ENCODE measurements at regions of chr5 and their contacts with region 1.

Region 1: DNA sequence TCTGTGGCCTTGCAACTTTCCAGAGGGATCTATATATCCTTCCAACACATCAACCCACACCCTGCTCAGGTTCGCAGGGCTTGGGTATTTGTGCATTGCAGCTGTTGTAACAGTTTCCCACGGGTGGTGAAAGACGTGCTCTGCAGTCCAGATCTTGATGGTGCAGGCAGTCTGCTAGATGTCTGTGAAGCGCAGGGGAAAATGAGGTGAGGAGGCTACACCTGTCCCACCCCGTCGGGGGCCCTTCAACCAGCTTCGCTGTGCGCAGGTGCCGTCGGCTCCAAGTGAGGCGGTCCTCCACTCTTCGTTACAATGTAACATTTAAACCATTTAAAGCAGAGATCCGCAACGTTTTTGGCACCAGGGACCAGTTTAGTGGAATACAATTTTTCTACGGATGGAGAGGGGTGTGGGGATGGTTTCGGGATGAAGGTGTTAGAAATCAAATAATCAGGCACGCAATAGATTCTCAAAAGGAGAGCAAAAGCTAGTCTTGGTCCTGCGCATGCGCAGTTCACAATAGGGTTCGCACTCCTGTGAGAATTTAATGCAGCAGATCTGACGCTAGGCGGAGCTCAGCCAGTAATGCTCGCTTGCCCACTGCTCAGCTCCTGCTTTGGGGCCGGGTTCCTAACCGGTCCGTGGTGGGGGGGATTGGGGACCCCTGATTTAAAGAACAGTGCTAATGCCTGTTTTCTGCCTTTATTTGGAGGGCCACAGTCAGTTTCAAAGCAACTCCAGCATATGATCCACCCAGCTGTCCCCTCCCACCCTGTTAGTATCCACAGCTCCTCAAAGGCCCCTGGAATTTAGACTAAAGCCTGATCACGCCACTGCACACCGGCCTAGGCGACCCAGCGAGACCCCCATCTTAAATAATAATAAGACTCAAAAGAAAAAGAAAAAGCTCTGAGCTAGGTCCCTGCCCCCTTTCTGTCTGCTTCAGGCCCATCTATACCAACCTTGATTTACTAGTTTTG is 97.1 kb upstream of the SELENOP start:
- DNase-seq: peak; percentile 95
- ATAC-seq: peak; percentile 94
- H3K4me3 Mint-ChIP-seq: peak overlapping the region; percentile 89
- H3K27ac Mint-ChIP-seq: peak overlapping the region; percentile 82
- H3K4me1 Mint-ChIP-seq: peaks cover 18% of the 10 kb centered on the region
- H3K27me3 Mint-ChIP-seq: peaks cover 28% of the 10 kb centered on the region

Region 2: GRCh38 chr5:42889311-42889933 is 19.4 kb before region 1 on chr5:
- CTCF ChIA-PET with region 1: interaction called, 13 read pairs
- POLR2A ChIA-PET with region 1: no interaction called
- DNase-seq: peak; percentile 81
- ATAC-seq: peak; percentile 93
- H3K4me3 Mint-ChIP-seq: no peak overlapping the region
- H3K27ac Mint-ChIP-seq: no peak overlapping the region
- H3K4me1 Mint-ChIP-seq: no peaks in the 10 kb centered on the region
- H3K27me3 Mint-ChIP-seq: peaks cover 11% of the 10 kb centered on the region

Region 3: GRCh38 chr5:42950440-42951292 is 41.9 kb after region 1 on chr5:
- CTCF ChIA-PET with region 1: interaction called, 75 read pairs
- POLR2A ChIA-PET with region 1: interaction called, 17 read pairs
- DNase-seq: peak; percentile 73
- ATAC-seq: peak; percentile 38
- H3K4me3 Mint-ChIP-seq: peak overlapping the region; percentile 96
- H3K27ac Mint-ChIP-seq: peak overlapping the region; percentile 100
- H3K4me1 Mint-ChIP-seq: peaks cover 43% of the 10 kb centered on the region
- H3K27me3 Mint-ChIP-seq: no peaks in the 10 kb centered on the region

Region 4: GRCh38 chr5:42989190-42989589 is 80.4 kb after region 1 on chr5:
- CTCF ChIA-PET with region 1: interaction called, 17 read pairs
- POLR2A ChIA-PET with region 1: interaction called, 13 read pairs
- DNase-seq: no peak
- ATAC-seq: no peak
- H3K4me3 Mint-ChIP-seq: peak overlapping the region; percentile 72
- H3K27ac Mint-ChIP-seq: peak overlapping the region; percentile 75
- H3K4me1 Mint-ChIP-seq: peaks cover 56% of the 10 kb centered on the region
- H3K27me3 Mint-ChIP-seq: no peaks in the 10 kb centered on the region

Region 5: GRCh38 chr5:43008369-43009153 is 99.8 kb after region 1 on chr5:
- CTCF ChIA-PET with region 1: interaction called, 10 read pairs
- POLR2A ChIA-PET with region 1: interaction called, 5 read pairs
- DNase-seq: peak; percentile 94
- ATAC-seq: peak; percentile 71
- H3K4me3 Mint-ChIP-seq: peak overlapping the region; percentile 90
- H3K27ac Mint-ChIP-seq: peak overlapping the region; percentile 98
- H3K4me1 Mint-ChIP-seq: peaks cover 44% of the 10 kb centered on the region
- H3K27me3 Mint-ChIP-seq: peaks cover 1% of the 10 kb centered on the region

Region 6: GRCh38 chr5:43040287-43041098 is 131.7 kb after region 1 on chr5 and contains the start of gene ANXA2R:
- CTCF ChIA-PET with region 1: interaction called, 29 read pairs
- POLR2A ChIA-PET with region 1: interaction called, 23 read pairs
- DNase-seq: peak; percentile 97
- ATAC-seq: peak; percentile 49
- H3K4me3 Mint-ChIP-seq: peak within 1 kb of the TSS; percentile 93
- H3K27ac Mint-ChIP-seq: peak within 1 kb of the TSS; percentile 100
- H3K4me1 Mint-ChIP-seq: peaks cover 39% of the 10 kb centered on the region
- H3K27me3 Mint-ChIP-seq: no peaks in the 10 kb centered on the region
- total RNA-seq, gene ANXA2R: 28.0 to 29.3 TPM

Region 7: DNA sequence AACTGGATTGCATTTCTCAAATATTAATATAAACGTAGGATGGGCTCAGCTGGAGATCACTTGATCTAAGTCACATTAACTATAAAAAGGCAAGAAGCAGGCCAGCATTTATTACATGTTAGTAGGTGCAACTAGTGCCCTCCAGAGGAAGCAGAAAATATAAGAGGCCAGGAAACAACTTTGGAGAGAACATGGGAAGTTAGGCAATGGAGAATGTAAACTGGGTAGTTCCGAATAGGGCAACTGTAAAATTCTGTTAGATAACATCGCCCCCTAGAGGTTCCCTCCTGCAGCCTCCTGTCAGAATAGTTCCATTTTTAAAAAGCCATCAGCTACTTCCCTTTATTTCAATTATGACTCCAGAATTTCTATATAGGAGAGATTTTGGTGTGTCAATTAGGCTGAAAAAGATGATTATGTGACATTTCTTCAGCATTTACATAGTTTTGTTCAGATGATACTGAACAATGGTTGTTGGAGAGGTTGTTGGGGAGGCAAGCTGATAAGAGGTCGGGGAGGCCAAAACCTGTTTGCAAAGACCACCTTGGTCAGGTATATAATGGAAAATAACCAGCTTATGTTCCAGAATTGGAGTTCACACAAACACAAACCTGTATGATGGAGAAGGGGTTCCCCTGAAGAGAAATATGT is 481.0 kb after region 1 on chr5:
- CTCF ChIA-PET with region 1: interaction called, 10 read pairs
- POLR2A ChIA-PET with region 1: no interaction called
- DNase-seq: peak; percentile 65
- ATAC-seq: peak; percentile 84
- H3K4me3 Mint-ChIP-seq: no peak overlapping the region
- H3K27ac Mint-ChIP-seq: peak overlapping the region; percentile 28
- H3K4me1 Mint-ChIP-seq: peaks cover 11% of the 10 kb centered on the region
- H3K27me3 Mint-ChIP-seq: no peaks in the 10 kb centered on the region

Measured in activated CD8-positive, alpha-beta T cell treated with anti-CD3 and anti-CD28 coated beads, Interleukin-2, amount 10 ng/mL, durations not matched to agents 7 days and 5 days (primary cell).